ENCODE measurements at regions of chr22 and their contacts with region 1.

Region 1: DNA sequence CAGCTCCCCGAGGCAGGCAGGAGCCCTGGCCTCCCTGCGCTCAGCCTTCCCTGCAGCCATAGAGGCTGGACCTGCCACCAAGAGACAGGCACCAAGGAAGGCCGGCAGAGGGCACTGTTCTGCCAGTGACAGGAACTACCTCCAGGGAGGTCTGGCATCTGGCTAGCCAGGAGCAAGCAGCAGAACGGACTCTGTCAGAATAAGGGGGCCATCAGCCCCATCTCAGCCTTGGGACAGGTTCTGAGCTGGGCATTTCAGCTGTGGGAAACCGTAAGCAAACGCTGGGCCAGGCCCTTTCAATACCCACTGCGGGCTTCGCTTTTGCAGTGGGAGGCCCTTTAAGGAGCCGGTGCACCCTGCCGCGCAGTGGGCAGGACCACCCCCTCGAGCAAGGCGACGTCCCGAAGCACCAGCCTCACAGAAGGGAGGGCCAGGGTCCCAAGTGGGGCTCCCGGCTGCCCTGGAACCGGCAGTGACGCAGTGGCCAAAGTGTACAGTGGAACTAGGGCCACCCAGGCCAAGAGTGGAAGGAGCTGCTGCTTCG is 18.2 kb downstream of the IFT27 start:
- DNase-seq: peak; percentile 81
- H3K4me3 Mint-ChIP-seq: no peak overlapping the region
- H3K27ac Mint-ChIP-seq: no peak overlapping the region
- H3K4me1 Mint-ChIP-seq: peaks cover 14% of the 10 kb centered on the region
- H3K27me3 Mint-ChIP-seq: peaks cover 10% of the 10 kb centered on the region
- CTCF ChIP-seq: peak; percentile 66

Region 2: GRCh38 chr22:36552289-36552688 is 205.5 kb before region 1 on chr22:
- CTCF ChIA-PET with region 1: interaction called, 27 read pairs
- POLR2A ChIA-PET with region 1: interaction called, 5 read pairs
- intact Hi-C with region 1: loop called (anchors 5 kb)
- DNase-seq: no peak
- H3K4me3 Mint-ChIP-seq: no peak overlapping the region
- H3K27ac Mint-ChIP-seq: no peak overlapping the region
- H3K4me1 Mint-ChIP-seq: peaks cover 3% of the 10 kb centered on the region
- H3K27me3 Mint-ChIP-seq: peaks cover 38% of the 10 kb centered on the region
- CTCF ChIP-seq: no peak

Region 3: DNA sequence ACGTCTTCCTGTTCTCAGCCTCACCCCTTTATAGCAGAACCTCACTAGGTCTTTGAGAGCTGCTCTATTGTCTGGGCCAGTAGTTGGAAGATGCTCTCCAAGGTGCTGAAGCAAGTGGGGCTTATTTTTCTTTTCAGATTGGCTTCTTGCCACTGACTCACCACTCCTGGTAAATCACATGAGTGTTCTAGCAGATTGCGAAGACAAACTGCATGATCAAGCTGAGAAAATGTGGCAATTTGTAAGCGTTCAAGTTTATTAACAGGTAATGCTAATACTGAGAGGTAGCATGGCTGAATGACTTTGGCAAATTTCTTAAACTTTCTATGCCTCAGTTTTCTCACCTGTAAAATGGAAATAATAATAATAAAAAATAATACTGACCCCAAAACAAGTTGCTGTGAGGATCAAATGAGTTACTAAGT is 113.4 kb before region 1 on chr22:
- CTCF ChIA-PET with region 1: no interaction called
- POLR2A ChIA-PET with region 1: interaction called, 14 read pairs
- intact Hi-C with region 1: loop called (anchors 5 kb)
- DNase-seq: peak; percentile 95
- H3K4me3 Mint-ChIP-seq: no peak overlapping the region
- H3K27ac Mint-ChIP-seq: no peak overlapping the region
- H3K4me1 Mint-ChIP-seq: peaks cover 19% of the 10 kb centered on the region
- H3K27me3 Mint-ChIP-seq: peaks cover 75% of the 10 kb centered on the region
- CTCF ChIP-seq: no peak

Region 4: DNA sequence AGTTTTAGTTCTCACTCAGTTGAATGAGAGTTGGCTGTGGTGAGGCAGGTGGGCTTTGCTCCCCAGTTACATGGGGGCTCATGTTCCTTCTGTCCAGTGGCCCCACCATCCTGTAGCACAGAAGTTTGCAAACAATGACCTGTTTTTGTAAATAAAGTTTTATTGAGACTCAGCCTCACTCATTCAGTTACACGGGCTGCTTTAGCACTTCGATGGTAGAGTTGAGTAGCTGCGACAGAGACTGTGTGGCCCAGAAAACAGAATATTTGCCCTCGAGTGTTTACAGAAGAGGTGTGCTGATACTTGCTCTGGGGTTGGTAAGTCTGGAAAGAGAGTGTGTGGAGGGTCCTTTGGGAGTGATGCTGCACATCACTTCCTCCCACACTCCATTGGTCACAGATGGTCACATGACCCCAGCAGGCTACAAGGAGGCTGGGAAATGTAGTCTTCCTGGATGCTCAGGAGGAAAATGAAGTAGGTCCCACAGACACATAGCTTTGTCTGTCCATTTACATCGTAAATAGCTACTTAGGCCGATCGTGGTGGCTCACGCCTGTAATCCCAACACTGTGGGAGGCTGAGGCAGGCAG is 16.4 kb before region 1 on chr22:
- CTCF ChIA-PET with region 1: interaction called, 46 read pairs
- POLR2A ChIA-PET with region 1: interaction called, 14 read pairs
- intact Hi-C with region 1: no loop called
- DNase-seq: no peak
- H3K4me3 Mint-ChIP-seq: no peak overlapping the region
- H3K27ac Mint-ChIP-seq: no peak overlapping the region
- H3K4me1 Mint-ChIP-seq: peaks cover 21% of the 10 kb centered on the region
- H3K27me3 Mint-ChIP-seq: no peaks in the 10 kb centered on the region
- CTCF ChIP-seq: no peak

Region 5: DNA sequence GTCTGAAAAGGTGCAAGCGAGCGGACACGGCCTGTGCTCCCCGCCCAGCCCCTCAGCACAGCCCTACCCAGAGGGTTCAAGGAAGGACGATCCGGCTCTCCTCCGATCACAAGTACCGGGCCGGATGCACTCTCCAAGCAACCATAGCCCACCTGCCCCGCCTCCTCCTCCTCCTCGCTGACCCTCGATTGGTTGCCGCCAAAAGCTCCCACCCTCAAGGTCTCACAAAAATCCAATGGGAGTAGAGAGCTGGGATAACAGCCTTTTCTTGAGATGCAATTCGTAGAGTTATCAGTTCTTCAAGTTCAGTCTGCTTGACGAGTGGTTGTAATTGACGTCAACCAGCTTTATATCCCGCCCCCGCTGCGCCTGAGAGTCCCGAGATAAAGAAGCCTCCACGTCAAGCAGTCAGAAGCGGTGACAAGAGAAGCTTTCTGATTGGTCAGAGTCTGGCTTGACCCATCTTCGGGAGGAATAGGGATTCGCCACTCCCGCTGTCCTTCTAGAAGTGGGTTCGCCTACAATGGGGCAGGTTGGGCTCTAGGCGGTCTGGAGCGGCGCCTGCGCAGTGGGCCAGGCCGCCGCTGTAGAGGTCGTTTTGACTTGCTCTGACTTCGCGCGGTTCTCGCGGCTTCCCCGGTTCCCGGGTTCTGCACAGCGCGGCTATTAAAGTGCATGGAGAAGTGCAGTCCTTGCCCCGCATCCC is 18.4 kb after region 1 on chr22 and contains the start of gene IFT27:
- CTCF ChIA-PET with region 1: interaction called, 158 read pairs
- POLR2A ChIA-PET with region 1: interaction called, 69 read pairs
- intact Hi-C with region 1: loop called (anchors 1 kb)
- DNase-seq: peak; percentile 100
- H3K4me3 Mint-ChIP-seq: peak within 1 kb of the TSS; percentile 84
- H3K27ac Mint-ChIP-seq: peak within 1 kb of the TSS; percentile 79
- H3K4me1 Mint-ChIP-seq: peaks cover 6% of the 10 kb centered on the region
- H3K27me3 Mint-ChIP-seq: no peaks in the 10 kb centered on the region
- CTCF ChIP-seq: no peak
- total RNA-seq, gene IFT27: 17.6 and 28.7 TPM in 2 replicates

Region 6: GRCh38 chr22:36795633-36796032 is 37.9 kb after region 1 on chr22:
- CTCF ChIA-PET with region 1: no interaction called
- POLR2A ChIA-PET with region 1: no interaction called
- intact Hi-C with region 1: no loop called
- DNase-seq: no peak
- H3K4me3 Mint-ChIP-seq: no peak overlapping the region
- H3K27ac Mint-ChIP-seq: no peak overlapping the region
- H3K4me1 Mint-ChIP-seq: no peaks in the 10 kb centered on the region
- H3K27me3 Mint-ChIP-seq: peaks cover 33% of the 10 kb centered on the region
- CTCF ChIP-seq: no peak

Region 7: DNA sequence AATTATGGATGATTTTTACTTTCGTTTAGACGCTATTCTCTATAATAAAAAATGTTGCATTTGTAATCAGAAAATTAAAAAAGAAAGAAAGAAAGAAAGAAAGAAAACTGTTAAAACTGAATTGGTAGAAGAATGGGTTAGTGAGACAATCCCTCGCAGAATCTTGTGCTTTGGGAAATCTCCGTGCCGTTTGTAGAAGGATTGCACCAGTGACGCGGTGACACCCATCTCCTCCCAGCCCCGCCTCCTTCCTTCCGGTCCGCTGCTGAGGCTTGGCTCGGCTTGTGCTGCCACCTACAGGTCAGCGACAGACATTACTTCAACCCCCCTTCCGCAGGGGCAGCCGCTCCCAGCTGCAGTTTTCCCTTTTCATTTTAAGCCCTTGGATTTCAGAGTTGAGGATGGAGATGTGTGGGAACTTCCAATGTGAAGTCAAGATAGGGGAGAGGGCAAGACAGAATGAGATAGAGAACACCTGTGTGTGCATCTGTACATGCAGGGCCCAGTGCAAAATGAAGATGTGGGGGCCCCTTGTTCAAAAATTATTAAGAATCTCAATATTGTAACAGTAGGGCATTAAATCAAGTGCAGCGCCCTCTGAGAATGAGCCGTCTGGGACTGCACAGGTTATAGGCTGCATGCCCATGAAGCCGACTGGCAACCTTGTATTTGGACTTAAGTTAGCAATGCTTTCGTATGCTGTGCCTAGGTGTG is 220.4 kb after region 1 on chr22:
- CTCF ChIA-PET with region 1: interaction called, 4 read pairs
- POLR2A ChIA-PET with region 1: no interaction called
- intact Hi-C with region 1: loop called (anchors 1 kb)
- DNase-seq: peak; percentile 87
- H3K4me3 Mint-ChIP-seq: peak overlapping the region; percentile 67
- H3K27ac Mint-ChIP-seq: peak overlapping the region; percentile 73
- H3K4me1 Mint-ChIP-seq: peaks cover 10% of the 10 kb centered on the region
- H3K27me3 Mint-ChIP-seq: no peaks in the 10 kb centered on the region
- CTCF ChIP-seq: peak; percentile 84

Measured in MCF 10A (cell line).